ENCODE measurements at regions of chr6 and their contacts with region 1.

Region 1: DNA sequence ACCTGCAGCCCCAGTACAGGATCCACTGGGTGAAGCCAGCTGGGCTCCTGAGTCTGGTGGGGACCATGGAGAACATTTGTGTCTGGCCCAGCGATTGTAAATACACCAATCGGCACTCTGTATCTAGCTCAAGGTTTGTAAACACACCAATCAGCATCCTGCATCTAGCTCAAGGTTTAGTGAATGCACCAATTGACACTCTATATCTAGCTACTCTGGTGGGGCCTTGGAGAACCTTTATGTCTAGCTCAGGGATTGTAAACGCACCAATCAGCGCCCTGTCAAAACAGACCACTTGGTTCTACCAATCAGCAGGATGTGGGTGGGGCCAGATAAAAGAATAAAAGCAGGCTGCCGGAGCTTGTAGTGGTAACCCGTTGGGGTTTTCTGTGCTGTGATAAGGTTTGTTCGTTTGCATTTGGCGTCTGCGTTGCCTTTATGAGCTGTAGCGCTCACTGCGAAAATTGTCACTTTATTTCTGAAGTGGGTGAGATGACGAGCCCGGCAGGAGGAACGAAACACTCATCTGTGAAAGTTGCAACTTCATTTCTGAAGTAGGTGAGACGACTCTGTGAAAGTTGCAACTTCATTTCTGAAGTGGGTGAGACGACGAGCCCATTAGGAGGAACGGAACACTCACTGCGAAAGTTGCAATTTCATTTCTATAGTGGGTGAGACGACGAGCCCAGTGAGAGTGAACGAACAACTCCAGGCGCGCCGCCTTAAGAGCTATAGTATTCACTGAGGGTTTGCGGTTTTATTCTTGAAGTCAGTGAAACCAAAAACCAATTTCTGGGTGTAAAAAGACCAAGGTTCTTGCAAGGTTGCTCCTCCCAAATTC is 31.1 kb downstream of the SERPINB6 start:
- DNase-seq: peak; percentile 81
- H3K4me3 Mint-ChIP-seq: peak overlapping the region; percentile 69
- H3K27ac Mint-ChIP-seq: peak overlapping the region; percentile 94
- H3K4me1 Mint-ChIP-seq: peaks cover 57% of the 10 kb centered on the region
- H3K27me3 Mint-ChIP-seq: peaks cover 31% of the 10 kb centered on the region

Region 2: GRCh38 chr6:2450335-2450945 is 489.8 kb before region 1 on chr6:
- CTCF ChIA-PET with region 1: no interaction called
- POLR2A ChIA-PET with region 1: no interaction called
- DNase-seq: no peak
- H3K4me3 Mint-ChIP-seq: no peak overlapping the region
- H3K27ac Mint-ChIP-seq: no peak overlapping the region
- H3K4me1 Mint-ChIP-seq: peaks cover 4% of the 10 kb centered on the region
- H3K27me3 Mint-ChIP-seq: peaks cover 20% of the 10 kb centered on the region

Region 3: DNA sequence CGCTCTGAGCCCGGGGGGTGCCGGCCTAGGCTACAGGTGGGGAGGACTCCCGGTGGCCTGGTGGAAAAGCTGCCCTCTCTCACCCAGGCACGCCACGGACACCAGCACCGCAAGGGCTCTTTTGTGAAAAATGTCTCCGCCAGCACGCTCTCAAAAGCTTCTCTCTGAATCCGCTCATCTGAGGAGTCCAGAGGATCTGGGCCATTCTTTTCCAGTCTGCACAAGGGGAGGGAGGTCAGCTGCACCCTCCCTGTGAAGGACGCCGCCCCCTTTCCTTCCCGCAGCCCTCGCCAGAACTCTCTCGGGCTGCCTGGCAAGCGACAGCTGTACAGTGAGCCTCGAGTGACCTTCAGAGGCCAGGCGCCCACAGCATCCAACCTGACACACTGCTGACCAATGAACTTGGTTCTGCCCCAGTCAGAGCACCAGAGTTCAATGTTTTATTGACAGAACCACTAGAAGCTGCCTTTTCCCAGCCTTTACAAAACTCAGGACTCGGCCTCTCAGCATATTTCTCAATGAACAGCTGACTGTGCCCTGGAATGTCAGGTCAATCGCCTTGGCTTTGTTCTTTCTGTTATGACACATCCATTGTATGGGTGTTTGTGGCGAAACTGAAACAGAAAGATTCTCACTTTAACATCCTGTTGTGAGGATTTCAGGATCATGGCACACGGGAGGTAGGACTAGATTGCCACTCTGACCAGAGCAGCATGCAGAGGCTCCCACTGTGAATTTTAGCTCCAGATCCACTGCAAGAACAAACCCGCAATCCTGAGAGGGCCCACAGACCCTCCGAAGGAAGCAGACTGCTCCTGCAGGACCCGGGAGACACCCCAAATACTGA is 63.8 kb before region 1 on chr6:
- CTCF ChIA-PET with region 1: no interaction called
- POLR2A ChIA-PET with region 1: interaction called, 14 read pairs
- DNase-seq: no peak
- H3K4me3 Mint-ChIP-seq: peak overlapping the region; percentile 81
- H3K27ac Mint-ChIP-seq: peak overlapping the region; percentile 91
- H3K4me1 Mint-ChIP-seq: peaks cover 77% of the 10 kb centered on the region
- H3K27me3 Mint-ChIP-seq: no peaks in the 10 kb centered on the region

Measured in activated CD4-positive, alpha-beta memory T cell treated with anti-CD3 and anti-CD28 coated beads, Interleukin-2, amount 10 ng/mL, durations not matched to agents 7 days and 5 days (primary cell).